Naive thymus-derived CD4-positive, alpha-beta T cell (primary cell): ENCODE measurements at regions of chr6 and their contacts with region 1.

Region 1: DNA sequence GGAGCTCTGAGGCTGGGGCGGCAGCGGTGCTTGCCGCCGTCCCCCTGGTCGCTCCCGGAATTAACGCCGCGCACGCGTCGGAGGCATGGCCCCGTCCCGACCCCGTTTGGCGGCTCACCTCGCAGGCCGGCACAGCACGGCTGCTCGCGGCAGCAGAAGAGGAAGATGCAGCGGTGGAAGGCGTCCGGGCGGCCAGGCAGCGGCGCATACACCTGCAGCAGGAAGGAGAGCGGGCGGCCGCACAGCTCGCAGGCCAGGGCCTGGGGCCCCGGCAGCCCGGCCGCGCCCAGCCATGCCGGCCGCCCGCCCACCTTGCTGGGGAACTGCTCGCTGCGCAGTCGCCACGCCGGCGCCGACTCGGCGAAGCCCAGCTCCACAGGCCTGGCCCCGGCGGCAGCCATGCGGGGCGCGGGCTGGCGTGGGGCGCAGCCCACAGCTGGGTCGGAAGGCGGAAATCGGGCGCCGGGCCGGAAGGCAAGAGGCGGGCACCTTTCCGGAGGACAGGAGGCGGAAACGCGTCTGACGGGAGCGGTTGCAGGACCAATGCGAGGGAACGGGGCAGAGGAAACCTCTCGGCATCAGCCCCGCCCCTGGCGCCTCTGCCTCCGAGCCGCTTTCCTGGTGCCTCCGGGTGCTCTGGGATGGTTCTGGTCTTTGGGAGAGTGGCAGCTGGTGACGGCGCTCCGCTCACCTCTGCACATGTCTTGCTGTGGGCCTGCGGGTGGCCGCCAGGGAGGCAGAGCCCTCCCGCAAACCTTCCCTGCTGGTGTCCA is at the start of gene PDCD2:
- DNase-seq: peak; percentile 82 to 92 (median 91)
- ATAC-seq: peak; percentile 96
- H3K4me3 ChIP-seq: peak within 1 kb of the TSS; percentile 89
- H3K4me3 Mint-ChIP-seq: peak within 1 kb of the TSS; percentile 96 to 100 (median 97)
- H3K27ac ChIP-seq: peak within 1 kb of the TSS; percentile 88
- H3K27ac Mint-ChIP-seq: peak within 1 kb of the TSS; percentile 94 to 99 (median 96)
- H3K4me1 ChIP-seq: peaks cover 8 to 11% of the 10 kb centered on the region in 2 donors
- H3K4me1 Mint-ChIP-seq: peaks cover 14 to 42% (median 37%) of the 10 kb centered on the region in 7 donors
- H3K27me3 ChIP-seq: no peaks in the 10 kb centered on the region
- H3K27me3 Mint-ChIP-seq: peaks cover 0 to 4% (median 0%) of the 10 kb centered on the region in 5 donors
- total RNA-seq, gene PDCD2: 49.4 to 80.1 (median 76.1) TPM

Region 2: GRCh38 chr6:168884646-168885086 is 1699.7 kb before region 1 on chr6:
- CTCF ChIA-PET with region 1: no interaction called
- POLR2A ChIA-PET with region 1: no interaction called
- intact Hi-C with region 1: loop called in 1 of 2 experiments (anchors 1 kb)
- DNase-seq: peak; percentile 49 to 86 (median 82)
- ATAC-seq: peak; percentile 91
- H3K4me3 ChIP-seq: peak overlapping the region; percentile 61
- H3K4me3 Mint-ChIP-seq: peak overlapping the region; percentile 70 to 95 (median 90)
- H3K27ac ChIP-seq: peak overlapping the region; percentile 56
- H3K27ac Mint-ChIP-seq: peak overlapping the region; percentile 86 to 95 (median 91)
- H3K4me1 ChIP-seq: peaks cover 8 to 9% of the 10 kb centered on the region in 2 donors
- H3K4me1 Mint-ChIP-seq: peaks cover 7 to 13% (median 9%) of the 10 kb centered on the region in 7 donors
- H3K27me3 ChIP-seq: no peaks in the 10 kb centered on the region
- H3K27me3 Mint-ChIP-seq: peaks cover 0 to 12% (median 0%) of the 10 kb centered on the region in 5 donors

Region 3: DNA sequence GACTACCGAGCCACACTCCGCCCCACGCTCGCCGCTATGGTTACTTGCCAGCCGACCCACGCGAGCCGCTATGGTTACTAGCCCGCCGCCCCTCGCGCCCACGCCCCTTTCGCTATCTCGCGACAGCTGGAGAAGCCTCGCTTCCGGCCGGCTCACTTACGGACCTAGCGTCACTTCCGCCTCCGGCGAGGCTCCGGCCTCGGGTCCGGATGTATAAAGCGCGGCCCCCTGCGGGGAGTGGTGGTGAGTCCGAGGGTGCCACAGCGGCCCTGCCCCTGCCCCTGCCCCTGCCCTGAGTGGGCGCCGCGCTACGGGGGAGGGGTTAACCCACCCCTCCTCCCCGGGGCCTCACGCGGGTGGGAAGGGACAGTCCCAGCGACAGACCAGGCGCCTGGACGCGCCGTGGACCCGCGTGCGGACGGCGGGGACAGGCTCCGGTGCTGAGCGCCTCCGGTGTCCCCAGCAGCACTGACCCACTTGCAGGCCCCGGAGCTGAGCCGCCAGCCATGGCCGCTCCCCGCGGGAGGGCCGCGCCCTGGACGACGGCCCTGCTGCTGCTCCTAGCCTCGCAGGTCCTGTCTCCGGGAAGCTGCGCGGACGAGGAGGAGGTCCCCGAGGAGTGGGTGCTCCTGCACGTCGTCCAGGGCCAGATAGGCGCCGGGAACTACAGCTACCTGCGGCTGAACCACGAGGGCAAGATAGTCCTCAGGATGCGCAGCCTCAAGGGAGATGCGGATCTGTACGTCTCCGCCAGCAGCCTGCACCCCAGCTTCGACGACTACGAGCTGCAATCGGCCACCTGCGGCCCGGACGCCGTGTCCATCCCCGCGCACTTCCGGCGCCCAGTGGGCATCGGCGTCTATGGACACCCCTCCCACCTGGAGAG is 882.2 kb before region 1 on chr6 and contains the starts of genes C6orf120 and WDR27:
- CTCF ChIA-PET with region 1: no interaction called
- POLR2A ChIA-PET with region 1: interaction called, 12 read pairs
- intact Hi-C with region 1: loop called (anchors 1 kb)
- DNase-seq: peak; percentile 91 to 98 (median 94)
- ATAC-seq: peak; percentile 93
- H3K4me3 ChIP-seq: peak within 1 kb of the TSS; percentile 95
- H3K4me3 Mint-ChIP-seq: peak within 1 kb of the TSS; percentile 89 to 94 (median 92)
- H3K27ac ChIP-seq: peak within 1 kb of the TSS; percentile 98
- H3K27ac Mint-ChIP-seq: peak within 1 kb of the TSS; percentile 88 to 96 (median 93)
- H3K4me1 ChIP-seq: peaks cover 22 to 36% of the 10 kb centered on the region in 2 donors
- H3K4me1 Mint-ChIP-seq: peaks cover 28 to 66% (median 55%) of the 10 kb centered on the region in 7 donors
- H3K27me3 ChIP-seq: no peaks in the 10 kb centered on the region
- H3K27me3 Mint-ChIP-seq: no peaks in the 10 kb centered on the region
- total RNA-seq, gene C6orf120: 16.0 to 38.1 (median 19.3) TPM
- total RNA-seq, gene WDR27: 22.7 to 89.0 (median 41.4) TPM

Region 4: DNA sequence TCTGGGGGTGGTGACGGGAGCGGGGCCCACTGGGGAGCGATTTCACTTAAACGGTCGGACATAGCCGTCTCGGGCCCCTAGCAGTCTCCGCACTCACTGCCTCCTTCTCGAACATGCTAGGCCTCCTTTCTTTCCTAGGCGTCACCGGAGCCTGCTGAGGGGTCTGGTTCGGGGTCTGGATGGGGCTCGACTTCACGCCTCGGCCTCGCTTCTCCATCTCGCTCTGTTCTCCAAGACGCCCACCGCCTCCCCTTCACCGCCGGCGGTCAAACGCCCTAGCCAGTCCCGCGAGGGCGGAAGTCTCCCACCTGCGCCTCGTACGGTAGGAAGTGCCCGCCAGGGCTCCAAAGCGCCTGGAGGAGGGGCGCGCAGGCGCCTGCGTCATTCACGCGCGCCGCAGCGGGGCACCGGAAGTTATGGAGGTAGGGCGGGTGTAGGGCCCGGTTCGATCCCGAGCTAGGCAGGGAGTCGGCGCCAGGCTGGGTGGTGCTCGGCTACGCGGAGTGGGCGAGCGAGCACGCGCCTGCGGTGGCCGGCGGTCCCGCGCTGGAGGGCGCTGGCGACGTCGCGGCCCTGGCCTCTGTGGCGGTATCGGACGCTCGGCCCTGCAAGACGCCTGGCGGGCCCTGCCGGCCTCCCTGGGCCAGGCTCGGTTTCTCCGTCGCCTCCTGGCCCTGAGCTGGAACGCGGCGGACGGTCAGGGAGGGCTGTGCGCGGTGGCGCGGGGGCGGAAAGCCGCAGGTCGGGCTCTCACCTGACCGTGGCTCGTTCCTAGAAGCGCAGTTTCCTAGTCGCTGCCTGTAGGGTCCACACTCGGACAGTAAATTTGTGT is 832.9 kb before region 1 on chr6 and contains the starts of genes DYNLT2 and ERMARD:
- CTCF ChIA-PET with region 1: no interaction called
- POLR2A ChIA-PET with region 1: interaction called, 4 read pairs
- intact Hi-C with region 1: loop called (anchors 1 kb)
- DNase-seq: peak; percentile 89 to 97 (median 94)
- ATAC-seq: peak; percentile 98
- H3K4me3 ChIP-seq: peak within 1 kb of the TSS; percentile 84
- H3K4me3 Mint-ChIP-seq: peak within 1 kb of the TSS; percentile 92 to 100 (median 98)
- H3K27ac ChIP-seq: peak within 1 kb of the TSS; percentile 92
- H3K27ac Mint-ChIP-seq: peak within 1 kb of the TSS; percentile 96 to 100 (median 100)
- H3K4me1 ChIP-seq: peaks cover 17% of the 10 kb centered on the region in 2 donors
- H3K4me1 Mint-ChIP-seq: peaks cover 21 to 43% (median 37%) of the 10 kb centered on the region in 7 donors
- H3K27me3 ChIP-seq: no peaks in the 10 kb centered on the region
- H3K27me3 Mint-ChIP-seq: peaks cover 0 to 4% (median 0%) of the 10 kb centered on the region in 5 donors
- total RNA-seq, gene DYNLT2: 2.5 to 4.7 (median 4.1) TPM
- total RNA-seq, gene ERMARD: 30.3 to 43.7 (median 35.7) TPM